Aorta (tissue), 5 donors: ENCODE measurements at regions of chr7 and their contacts with region 1.

Region 1: DNA sequence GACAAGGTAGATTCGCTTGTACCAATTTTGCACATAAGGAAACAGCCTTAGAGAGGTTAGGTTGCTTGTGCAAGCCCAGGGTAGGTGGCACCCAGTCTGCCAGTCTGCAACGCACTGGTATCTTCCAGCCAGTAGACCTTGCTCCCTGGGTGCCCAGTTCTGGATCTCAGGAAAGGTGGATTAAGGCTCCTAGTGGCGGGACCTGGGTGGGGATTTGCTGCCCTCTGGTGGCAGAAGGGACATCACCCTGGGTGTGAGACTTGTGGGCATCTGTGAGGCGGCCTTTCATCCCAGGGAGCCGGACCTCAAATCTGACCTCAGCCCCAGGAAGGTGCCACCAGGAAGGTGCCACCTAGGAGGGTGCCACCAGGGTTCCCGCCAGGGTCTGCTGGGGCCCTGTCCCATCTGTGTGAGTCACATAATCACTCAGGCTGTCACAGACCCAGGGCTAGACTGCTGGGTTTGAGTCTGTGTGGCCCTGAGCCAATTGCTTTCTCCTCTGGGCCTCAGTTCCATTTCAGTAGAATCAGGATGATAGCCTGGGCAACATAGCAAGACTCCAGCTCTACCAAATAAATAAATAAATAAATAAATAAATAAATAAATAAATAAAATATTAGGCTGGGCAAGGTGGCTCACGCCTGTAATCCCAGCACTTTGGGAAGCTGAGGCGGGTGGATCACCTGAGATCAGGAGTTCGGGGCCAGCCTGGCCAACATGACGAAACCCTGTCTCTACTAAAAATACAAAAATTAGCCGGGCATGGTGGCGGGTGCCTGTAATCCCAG is 5.3 kb upstream of the PRKRIP1 start:
- DNase-seq: peak; percentile 87 to 94
- ATAC-seq: peak; percentile 89
- H3K4me3 ChIP-seq: no peak overlapping the region
- H3K27ac ChIP-seq: no peak overlapping the region
- H3K4me1 ChIP-seq: no peaks in the 10 kb centered on the region
- H3K27me3 ChIP-seq: no peaks in the 10 kb centered on the region

Region 2: GRCh38 chr7:101702362-101702850 is 688.5 kb before region 1 on chr7:
- intact Hi-C with region 1: no loop called
- DNase-seq: no peak
- ATAC-seq: no peak
- H3K4me3 ChIP-seq: no peak overlapping the region
- H3K27ac ChIP-seq: no peak overlapping the region
- H3K4me1 ChIP-seq: no peaks in the 10 kb centered on the region
- H3K27me3 ChIP-seq: peaks cover 0 to 3% of the 10 kb centered on the region in 2 donors

Region 3: DNA sequence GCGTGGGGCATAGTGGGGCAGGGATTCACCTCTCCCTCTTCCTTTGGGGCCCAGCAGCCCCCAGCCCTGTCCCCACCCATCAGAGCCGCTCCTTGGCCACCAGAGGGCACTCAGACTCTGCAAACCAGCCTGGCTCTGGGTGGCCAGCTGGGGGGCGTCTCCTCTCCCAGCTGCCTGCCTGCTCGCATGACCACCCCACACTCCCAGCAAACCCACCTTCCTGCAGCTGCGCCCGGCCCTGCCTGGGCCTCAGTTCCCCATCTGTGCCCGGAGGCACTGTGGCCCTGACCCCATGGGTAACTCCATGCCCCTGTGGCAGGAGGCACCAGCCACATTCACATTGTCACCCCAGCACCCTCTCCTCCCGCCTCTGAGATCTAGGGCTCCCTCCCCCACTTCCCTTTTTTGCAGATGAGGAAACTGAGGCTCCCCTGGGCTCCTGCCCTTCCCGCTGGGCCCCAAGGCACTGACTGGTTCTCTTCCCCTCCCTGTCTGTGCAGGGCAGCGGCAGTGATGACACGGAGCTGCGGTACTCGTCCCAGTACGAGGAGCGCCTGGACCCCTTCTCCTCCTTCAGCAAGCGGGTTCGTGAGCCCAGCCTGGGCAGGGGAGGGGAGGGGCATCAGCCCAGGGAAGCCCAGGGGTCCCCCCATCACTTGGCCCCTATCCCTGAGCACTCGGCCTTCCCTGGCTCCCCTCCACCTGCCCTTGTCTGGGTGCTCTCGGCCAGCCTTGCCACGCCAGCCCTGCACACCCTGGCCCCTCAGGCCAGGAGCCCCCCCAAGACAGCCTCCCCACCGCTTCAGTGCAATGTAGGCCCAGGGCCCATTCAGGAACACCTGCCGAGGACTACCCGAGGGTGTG is 111.1 kb before region 1 on chr7:
- intact Hi-C with region 1: loop called (anchors 1 to 2 kb)
- DNase-seq: no peak
- ATAC-seq: peak; percentile 75
- H3K4me3 ChIP-seq: no peak overlapping the region
- H3K27ac ChIP-seq: no peak overlapping the region
- H3K4me1 ChIP-seq: no peaks in the 10 kb centered on the region
- H3K27me3 ChIP-seq: no peaks in the 10 kb centered on the region